ENCODE measurements at regions of chr6 and their contacts with region 1.

Region 1: DNA sequence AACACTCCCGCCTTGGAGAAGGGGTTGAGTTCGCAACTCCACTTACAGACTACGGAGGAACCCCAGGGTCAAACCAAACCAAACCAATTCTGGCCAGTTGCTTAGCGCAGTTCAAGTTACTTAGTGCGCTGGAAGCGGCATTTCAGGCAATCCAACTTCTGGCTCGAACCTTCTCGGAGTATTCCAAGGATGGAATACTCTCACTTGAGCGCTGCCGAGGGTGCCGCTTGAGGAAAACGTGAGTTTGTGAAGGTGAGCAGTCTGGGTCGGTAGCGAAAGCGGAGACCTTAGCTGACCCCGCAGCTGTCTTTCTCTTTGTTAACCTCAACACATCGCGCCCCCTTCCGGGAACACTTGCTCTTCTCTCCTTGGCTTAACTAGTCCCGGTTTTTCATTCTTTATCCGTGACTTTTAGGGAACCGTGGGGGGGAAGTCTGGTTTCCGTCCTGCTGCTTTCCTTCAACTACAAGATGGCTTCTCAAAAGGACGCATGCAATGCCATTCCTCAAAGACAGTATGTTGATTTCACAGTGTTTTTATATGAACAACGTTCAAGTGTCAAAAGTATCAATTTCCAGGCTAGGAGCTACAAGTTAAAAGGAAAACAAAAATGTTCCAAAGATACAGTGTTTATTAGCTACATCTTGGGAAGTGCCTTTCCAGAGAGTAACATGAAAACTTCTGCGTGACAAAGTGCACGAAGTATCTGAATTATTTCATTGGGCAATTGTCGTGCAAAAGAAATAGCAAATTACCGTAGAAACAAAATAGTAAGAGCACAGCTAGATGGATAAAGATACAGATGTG is 742 bp upstream of the PNISR start:
- DNase-seq: peak; percentile 91
- ATAC-seq: peak; percentile 77
- H3K4me3 ChIP-seq: peak overlapping the region; percentile 59 to 85 (median 84)
- H3K27ac ChIP-seq: peak overlapping the region; percentile 98
- H3K4me1 ChIP-seq: peaks cover 55% of the 10 kb centered on the region
- H3K27me3 ChIP-seq: no peaks in the 10 kb centered on the region; a peak in 1 of 5 replicates
- CTCF ChIP-seq: peak; percentile 73
- EP300 ChIP-seq: no peak
- POLR2A ChIP-seq: no peak
- RAD21 ChIP-seq: 0 out of 2 replicates have a peak, but pooled peaks have one; percentile 7

Region 2: DNA sequence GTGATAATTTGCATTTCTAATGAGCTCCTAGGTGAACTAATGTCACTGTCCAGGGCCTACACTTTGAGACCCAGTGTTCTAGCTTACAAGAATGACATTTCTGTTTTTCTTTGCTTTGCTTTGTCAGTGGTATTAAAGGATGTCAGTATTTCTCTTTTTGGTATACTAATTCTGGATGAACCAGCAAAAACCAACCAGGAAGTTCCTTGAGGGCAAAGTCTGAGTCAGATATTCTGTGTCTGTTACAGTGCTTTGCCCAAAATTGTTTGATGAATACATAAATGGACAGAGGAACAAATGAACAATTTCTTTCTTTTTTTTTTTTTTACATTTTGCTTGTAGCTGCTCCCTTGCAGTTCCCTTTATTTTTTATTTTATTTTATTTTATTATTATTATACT is 47.2 kb before region 1 on chr6:
- CTCF ChIA-PET with region 1: no interaction called
- POLR2A ChIA-PET with region 1: no interaction called
- in situ Hi-C with region 1: no loop called
- intact Hi-C with region 1: no loop called
- DNase-seq: no peak
- ATAC-seq: no peak
- H3K4me3 ChIP-seq: no peak overlapping the region
- H3K27ac ChIP-seq: no peak overlapping the region
- H3K4me1 ChIP-seq: no peaks in the 10 kb centered on the region
- H3K27me3 ChIP-seq: no peaks in the 10 kb centered on the region
- CTCF ChIP-seq: no peak
- EP300 ChIP-seq: no peak
- POLR2A ChIP-seq: no peak
- RAD21 ChIP-seq: no peak

Region 3: DNA sequence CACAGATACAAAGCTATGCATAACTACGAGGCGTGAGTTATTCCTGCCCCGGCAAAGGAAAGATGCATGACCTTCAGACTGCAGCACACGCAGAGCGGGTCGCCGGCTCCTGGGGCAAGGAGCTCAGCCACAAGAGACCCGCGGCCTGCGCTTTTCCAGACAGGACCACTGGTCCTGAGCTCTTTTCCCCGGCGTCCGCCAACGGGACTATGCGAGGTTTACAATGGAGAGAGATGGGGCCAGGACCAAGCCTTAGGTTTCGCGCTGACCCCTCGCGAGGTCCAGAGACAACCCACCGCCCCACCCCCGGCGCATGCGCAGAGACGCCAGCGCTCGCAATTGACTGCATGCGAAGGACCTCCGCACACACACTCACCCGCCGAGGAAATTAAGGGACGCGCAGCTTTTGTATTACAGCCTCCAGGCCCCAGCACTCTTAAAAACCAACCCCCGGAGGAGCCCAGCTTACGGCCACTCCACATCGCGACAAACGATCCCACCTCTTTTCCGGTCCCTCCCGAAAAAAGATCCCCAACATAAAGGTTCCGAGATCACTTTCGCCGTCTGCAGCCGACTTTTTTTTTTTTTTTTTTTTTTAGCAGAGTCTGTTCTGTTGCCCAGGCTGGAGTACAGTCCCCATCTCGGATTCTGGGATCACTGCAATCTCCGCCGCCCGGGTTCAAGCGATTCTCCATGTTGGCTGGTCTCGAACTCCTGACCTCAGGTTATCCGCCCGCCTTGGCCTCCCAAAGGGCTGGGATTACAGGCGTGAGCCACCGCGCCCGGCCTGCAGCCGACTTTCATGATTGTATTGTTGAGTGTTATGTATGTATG is 31.9 kb before region 1 on chr6 and contains the start of gene COQ3:
- CTCF ChIA-PET with region 1: no interaction called
- POLR2A ChIA-PET with region 1: interaction called, 75 read pairs
- in situ Hi-C with region 1: no loop called
- intact Hi-C with region 1: loop called (anchors 1 kb)
- DNase-seq: peak; percentile 84
- ATAC-seq: peak; percentile 99
- H3K4me3 ChIP-seq: peak within 1 kb of the TSS; percentile 64 to 85 (median 67)
- H3K27ac ChIP-seq: peak within 1 kb of the TSS; percentile 82
- H3K4me1 ChIP-seq: peaks cover 19% of the 10 kb centered on the region
- H3K27me3 ChIP-seq: no peaks in the 10 kb centered on the region
- CTCF ChIP-seq: no peak
- EP300 ChIP-seq: no peak
- POLR2A ChIP-seq: peak; percentile 91 to 96
- RAD21 ChIP-seq: 0 out of 2 replicates have a peak, but pooled peaks have one; percentile 50
- total RNA-seq, gene COQ3: 20.5 and 26.6 TPM in 2 replicates

Measured in HepG2 (cell line).